Ascending aorta (tissue), 2 donors: ENCODE measurements at regions of chr2 and their contacts with region 1.

Region 1: GRCh38 chr2:178914259-178914849 is 107.1 kb upstream of the TTN start:
- DNase-seq: peak; percentile 22 to 93
- H3K4me3 ChIP-seq: no peak overlapping the region
- H3K27ac ChIP-seq: no peak overlapping the region
- H3K4me1 ChIP-seq: peaks cover 0 to 3% of the 10 kb centered on the region in 2 donors
- H3K27me3 ChIP-seq: no peaks in the 10 kb centered on the region
- CTCF ChIP-seq: peak; percentile 65 to 83 (median 83)

Region 2: GRCh38 chr2:178796079-178796677 is 118.2 kb before region 1 on chr2:
- intact Hi-C with region 1: loop called (anchors 1 kb)
- DNase-seq: no peak
- H3K4me3 ChIP-seq: no peak overlapping the region
- H3K27ac ChIP-seq: no peak overlapping the region
- H3K4me1 ChIP-seq: no peaks in the 10 kb centered on the region
- H3K27me3 ChIP-seq: no peaks in the 10 kb centered on the region
- CTCF ChIP-seq: peak; percentile 45 to 76 (median 64)

Region 3: GRCh38 chr2:179106676-179107428 is 192.5 kb after region 1 on chr2:
- intact Hi-C with region 1: loop called (anchors 10 kb)
- DNase-seq: peak; percentile 31 to 78
- H3K4me3 ChIP-seq: no peak overlapping the region
- H3K27ac ChIP-seq: peak overlapping the region; percentile 26 to 61
- H3K4me1 ChIP-seq: peaks cover 3 to 16% of the 10 kb centered on the region in 2 donors
- H3K27me3 ChIP-seq: no peaks in the 10 kb centered on the region
- CTCF ChIP-seq: no peak